Activated CD4-positive, alpha-beta memory T cell treated with anti-CD3 and anti-CD28 coated beads for 36 hours (primary cell): ENCODE measurements at regions of chr10 and their contacts with region 1.

Region 1: DNA sequence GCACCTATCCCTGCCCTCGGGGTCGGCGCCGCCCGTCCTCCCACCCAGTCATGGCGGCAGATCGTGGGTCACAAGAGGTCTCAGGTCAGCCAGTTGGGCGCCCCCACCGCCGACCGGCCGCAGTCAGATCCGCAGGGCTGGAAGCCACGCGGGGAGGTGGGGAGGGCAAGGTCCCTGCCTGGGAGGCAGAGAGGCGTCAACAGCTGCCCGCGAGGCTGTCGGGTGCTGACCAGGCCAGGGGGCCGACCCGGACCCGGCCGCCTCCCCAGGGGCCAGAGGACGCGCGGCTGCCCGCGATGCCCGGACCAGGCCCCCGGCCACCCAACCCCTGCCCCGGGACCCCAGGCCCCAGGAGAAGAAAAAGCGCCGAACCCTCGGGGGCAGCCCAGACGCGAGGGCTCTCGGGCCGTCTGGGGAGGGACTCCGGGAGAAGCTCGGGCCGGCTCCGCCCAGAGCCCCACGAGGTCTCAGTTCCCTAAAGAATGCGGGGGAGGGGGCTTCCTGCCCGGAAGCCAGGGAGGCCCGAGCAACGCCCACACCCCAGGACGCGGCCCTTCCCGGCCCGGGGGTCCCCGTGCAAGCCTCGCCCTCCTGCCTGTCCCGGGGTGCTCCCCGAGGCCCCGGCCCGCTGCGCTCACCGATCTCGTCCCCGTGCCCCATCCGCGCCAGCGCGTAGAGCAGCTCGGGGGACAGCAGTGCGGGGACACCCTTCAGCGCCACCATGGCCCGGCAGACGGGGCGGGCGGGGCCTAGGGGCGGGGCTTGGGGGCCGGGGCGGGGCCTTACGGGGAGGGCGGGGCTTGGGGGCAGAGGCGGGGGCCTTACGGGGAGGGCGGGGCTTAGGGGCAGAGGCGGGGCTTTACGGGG is at the start of gene FUOM:
- DNase-seq: peak; percentile 82
- H3K4me3 Mint-ChIP-seq: peak within 1 kb of the TSS; percentile 78
- H3K27ac Mint-ChIP-seq: peak within 1 kb of the TSS; percentile 69
- H3K4me1 Mint-ChIP-seq: peaks cover 3% of the 10 kb centered on the region
- H3K27me3 Mint-ChIP-seq: no peaks in the 10 kb centered on the region
- total RNA-seq, gene FUOM: 46.5 to 49.8 TPM

Region 2: DNA sequence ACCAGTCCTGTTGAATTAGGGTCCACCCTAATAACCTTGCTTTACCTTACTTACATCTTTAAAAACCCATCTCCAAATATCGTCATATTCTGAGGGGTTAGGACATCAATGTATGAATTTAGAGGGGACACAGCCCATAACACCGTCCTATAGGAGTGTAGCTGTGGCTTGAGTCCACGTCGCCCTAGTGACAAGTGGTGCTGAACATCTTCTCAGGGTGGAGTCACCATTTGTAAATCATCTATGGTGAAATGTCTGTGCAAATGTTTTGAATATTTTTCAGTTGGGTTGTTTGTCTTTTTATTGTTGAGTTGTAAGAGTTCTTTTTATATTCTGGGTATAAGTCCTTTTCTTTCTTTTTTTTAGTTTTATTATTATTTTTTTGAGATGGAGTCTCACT is 15.5 kb before region 1 on chr10:
- CTCF ChIA-PET with region 1: no interaction called
- POLR2A ChIA-PET with region 1: no interaction called
- intact Hi-C with region 1: no loop called
- DNase-seq: no peak
- H3K4me3 Mint-ChIP-seq: no peak overlapping the region
- H3K27ac Mint-ChIP-seq: no peak overlapping the region
- H3K4me1 Mint-ChIP-seq: no peaks in the 10 kb centered on the region
- H3K27me3 Mint-ChIP-seq: peaks cover 26% of the 10 kb centered on the region

Region 3: DNA sequence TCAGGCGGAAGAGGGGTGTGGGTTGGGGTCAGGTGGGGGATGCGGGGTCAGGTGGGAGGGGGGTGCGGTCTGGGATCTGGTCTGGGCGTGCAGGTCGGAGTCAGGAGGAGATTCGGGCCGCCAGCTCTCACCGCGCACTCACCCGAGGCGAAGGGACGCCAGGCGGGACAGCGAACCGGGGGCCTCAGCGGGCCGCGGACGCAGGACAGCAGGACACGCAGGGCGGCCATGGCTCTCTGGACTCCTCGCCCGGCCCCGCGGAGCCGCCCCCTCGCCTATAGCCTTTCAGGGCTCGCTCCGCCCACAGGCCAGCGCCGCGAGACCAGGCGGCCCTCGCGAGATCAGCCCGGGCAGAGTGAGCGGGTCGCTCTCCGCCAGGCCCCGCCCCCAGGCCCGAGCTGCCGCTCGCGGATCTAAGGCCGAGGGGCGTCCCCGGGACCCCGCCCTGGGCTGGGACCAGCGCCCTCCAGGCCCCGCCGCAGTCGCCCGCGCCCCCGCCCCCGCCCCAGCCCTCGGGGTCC is 15.6 kb after region 1 on chr10 and contains the start of gene ECHS1:
- CTCF ChIA-PET with region 1: no interaction called
- POLR2A ChIA-PET with region 1: no interaction called
- intact Hi-C with region 1: loop called (anchors 2 kb)
- DNase-seq: peak; percentile 96
- H3K4me3 Mint-ChIP-seq: peak within 1 kb of the TSS; percentile 81
- H3K27ac Mint-ChIP-seq: peak within 1 kb of the TSS; percentile 33
- H3K4me1 Mint-ChIP-seq: peaks cover 6% of the 10 kb centered on the region
- H3K27me3 Mint-ChIP-seq: no peaks in the 10 kb centered on the region
- total RNA-seq, gene ECHS1: 60.2 to 64.8 TPM